CD4-positive, alpha-beta T cell (primary cell): ENCODE measurements at regions of chr7 and their contacts with region 1.

Region 1: DNA sequence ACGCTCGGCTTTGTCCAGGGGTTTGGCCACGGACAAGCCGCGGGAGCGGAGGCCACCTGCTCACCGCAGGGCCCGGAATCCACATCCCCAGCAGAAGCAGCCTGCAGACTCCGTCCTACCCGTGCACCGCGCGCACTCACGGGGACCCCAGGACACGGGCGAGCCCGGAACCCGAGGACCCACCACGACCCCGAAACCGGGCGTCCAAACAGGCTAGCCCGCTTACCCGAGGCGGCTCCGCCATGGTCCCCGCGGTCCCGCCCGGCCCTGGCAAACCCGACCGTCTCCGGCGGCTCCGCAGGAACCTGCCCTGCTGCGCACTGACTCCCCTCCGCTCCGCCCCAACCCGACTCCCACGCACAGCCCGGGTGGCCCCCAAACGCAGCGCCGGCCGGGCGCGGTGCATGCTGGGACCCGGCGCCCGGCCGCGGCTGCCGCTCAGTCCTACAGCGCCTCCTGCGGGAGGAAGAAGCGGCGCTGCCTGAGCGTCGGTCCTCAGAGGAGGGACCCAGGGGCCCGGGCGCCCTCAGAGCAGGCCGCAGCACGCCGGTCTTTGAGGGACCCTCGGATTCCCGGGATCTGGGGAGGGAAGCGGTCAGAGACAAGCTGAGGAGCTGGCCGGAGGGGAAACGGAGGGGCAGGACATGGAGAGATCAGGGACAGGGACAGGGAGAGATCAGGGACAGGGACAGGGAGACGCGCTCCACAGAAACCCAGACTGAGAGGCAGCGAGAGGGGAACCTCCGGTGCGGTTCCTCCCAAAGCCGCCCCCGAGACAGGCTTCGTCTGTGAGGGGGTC is at the start of gene ZNF786:
- DNase-seq: peak; percentile 81 to 97 (median 90)
- ATAC-seq: peak; percentile 82
- H3K4me3 ChIP-seq: peak within 1 kb of the TSS; percentile 72
- H3K4me3 Mint-ChIP-seq: peak within 1 kb of the TSS; percentile 100
- H3K27ac ChIP-seq: peak within 1 kb of the TSS; percentile 82 to 90
- H3K27ac Mint-ChIP-seq: peak within 1 kb of the TSS; percentile 93
- H3K4me1 ChIP-seq: peaks cover 27% of the 10 kb centered on the region
- H3K4me1 Mint-ChIP-seq: peaks cover 26% of the 10 kb centered on the region
- H3K27me3 ChIP-seq: no peaks in the 10 kb centered on the region
- H3K27me3 Mint-ChIP-seq: no peaks in the 10 kb centered on the region
- CTCF ChIP-seq: peak; percentile 87
- total RNA-seq, gene ZNF786: 2.7 to 3.5 TPM

Region 2: GRCh38 chr7:148987010-148987750 is 103.4 kb before region 1 on chr7:
- CTCF ChIA-PET with region 1: no interaction called
- POLR2A ChIA-PET with region 1: interaction called, 3 read pairs
- intact Hi-C with region 1: loop called in 1 of 2 experiments (anchors 2 kb)
- DNase-seq: peak; percentile 58 to 94 (median 70)
- ATAC-seq: peak; percentile 71
- H3K4me3 ChIP-seq: peak overlapping the region; percentile 95
- H3K4me3 Mint-ChIP-seq: peak overlapping the region; percentile 96
- H3K27ac ChIP-seq: peak overlapping the region; percentile 73 to 94
- H3K27ac Mint-ChIP-seq: peak overlapping the region; percentile 95
- H3K4me1 ChIP-seq: peaks cover 41% of the 10 kb centered on the region
- H3K4me1 Mint-ChIP-seq: peaks cover 55% of the 10 kb centered on the region
- H3K27me3 ChIP-seq: no peaks in the 10 kb centered on the region
- H3K27me3 Mint-ChIP-seq: peaks cover 5% of the 10 kb centered on the region
- CTCF ChIP-seq: no peak

Region 3: GRCh38 chr7:149005241-149006050 is 85.2 kb before region 1 on chr7:
- CTCF ChIA-PET with region 1: interaction called, 8 read pairs
- POLR2A ChIA-PET with region 1: interaction called, 10 read pairs
- intact Hi-C with region 1: loop called (anchors 1 kb)
- DNase-seq: peak; percentile 75 to 92 (median 80)
- ATAC-seq: peak; percentile 90
- H3K4me3 ChIP-seq: no peak overlapping the region
- H3K4me3 Mint-ChIP-seq: no peak overlapping the region
- H3K27ac ChIP-seq: no peak overlapping the region
- H3K27ac Mint-ChIP-seq: peak overlapping the region; percentile 46
- H3K4me1 ChIP-seq: peaks cover 12% of the 10 kb centered on the region
- H3K4me1 Mint-ChIP-seq: peaks cover 6% of the 10 kb centered on the region
- H3K27me3 ChIP-seq: no peaks in the 10 kb centered on the region
- H3K27me3 Mint-ChIP-seq: no peaks in the 10 kb centered on the region
- CTCF ChIP-seq: peak; percentile 95

Region 4: DNA sequence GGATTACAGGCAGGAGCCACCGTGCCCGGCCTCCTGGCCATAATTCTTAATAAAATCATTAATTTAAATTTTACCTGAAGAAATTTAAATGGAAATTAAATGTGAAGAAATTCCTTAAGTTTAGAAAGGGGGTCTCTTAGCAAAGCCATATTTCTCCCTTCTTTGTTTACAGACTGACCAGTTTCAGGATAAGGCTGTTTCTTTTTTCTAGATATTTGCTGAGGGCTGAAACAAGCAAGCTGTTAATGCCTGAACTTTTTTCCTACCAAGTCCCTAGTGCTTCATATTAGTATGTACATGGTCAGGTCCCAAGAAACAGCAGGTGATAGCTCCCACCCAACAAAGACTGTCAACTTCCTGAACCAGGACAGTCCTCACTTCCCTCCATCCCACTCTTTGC is 44.2 kb before region 1 on chr7:
- CTCF ChIA-PET with region 1: no interaction called
- POLR2A ChIA-PET with region 1: no interaction called
- intact Hi-C with region 1: no loop called
- DNase-seq: no peak
- ATAC-seq: no peak
- H3K4me3 ChIP-seq: no peak overlapping the region
- H3K4me3 Mint-ChIP-seq: no peak overlapping the region
- H3K27ac ChIP-seq: no peak overlapping the region
- H3K27ac Mint-ChIP-seq: no peak overlapping the region
- H3K4me1 ChIP-seq: no peaks in the 10 kb centered on the region
- H3K4me1 Mint-ChIP-seq: no peaks in the 10 kb centered on the region
- H3K27me3 ChIP-seq: no peaks in the 10 kb centered on the region
- H3K27me3 Mint-ChIP-seq: no peaks in the 10 kb centered on the region
- CTCF ChIP-seq: no peak

Region 5: DNA sequence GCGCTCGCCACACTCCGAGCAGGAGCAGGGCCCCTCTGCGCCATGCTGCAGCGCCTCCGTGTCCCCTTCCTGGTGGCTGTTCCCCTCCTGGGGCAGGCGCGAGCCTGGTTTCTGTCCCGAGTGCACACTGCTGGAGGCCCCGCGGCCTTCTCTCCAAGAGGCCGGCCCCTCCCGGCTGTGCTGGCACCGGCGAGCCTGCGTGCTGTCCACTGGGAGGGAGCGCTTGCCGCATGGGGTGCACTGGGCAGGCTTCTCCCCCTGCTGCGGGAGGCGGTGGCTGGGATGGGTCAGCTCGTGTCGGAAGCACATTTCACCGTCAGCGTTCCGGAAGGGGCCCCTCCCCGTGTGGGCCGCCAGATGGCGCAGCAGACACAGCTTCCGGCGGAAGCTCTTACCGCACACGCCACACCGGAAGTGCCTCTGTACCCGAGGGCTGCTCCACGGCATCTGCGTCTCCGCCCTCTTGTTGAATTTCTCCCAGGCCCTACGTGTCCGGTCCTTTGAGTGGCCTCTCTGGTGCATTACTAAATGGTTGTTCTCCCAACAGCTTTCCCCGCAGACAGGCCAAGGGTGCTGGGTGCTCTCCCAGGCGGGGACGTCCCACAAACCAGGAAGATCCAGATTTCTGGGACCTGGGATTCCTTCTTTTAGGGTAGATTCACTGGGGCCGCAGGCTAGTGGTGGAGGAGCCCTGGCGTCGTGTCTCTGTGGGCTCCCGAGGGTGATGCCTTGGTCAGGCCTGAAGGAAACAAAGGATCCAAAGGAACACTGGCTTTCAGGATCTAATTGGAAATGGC is 18.8 kb before region 1 on chr7:
- CTCF ChIA-PET with region 1: interaction called, 3 read pairs
- POLR2A ChIA-PET with region 1: interaction called, 4 read pairs
- intact Hi-C with region 1: loop called (anchors 1 kb)
- DNase-seq: peak; percentile 23 to 81 (median 44)
- ATAC-seq: peak; percentile 76
- H3K4me3 ChIP-seq: no peak overlapping the region
- H3K4me3 Mint-ChIP-seq: no peak overlapping the region
- H3K27ac ChIP-seq: peak overlapping the region in 1 of 2 donors; percentile 34
- H3K27ac Mint-ChIP-seq: peak overlapping the region; percentile 43
- H3K4me1 ChIP-seq: peaks cover 11% of the 10 kb centered on the region
- H3K4me1 Mint-ChIP-seq: peaks cover 15% of the 10 kb centered on the region
- H3K27me3 ChIP-seq: no peaks in the 10 kb centered on the region
- H3K27me3 Mint-ChIP-seq: no peaks in the 10 kb centered on the region
- CTCF ChIP-seq: no peak

Region 6: GRCh38 chr7:149125863-149126661 is 35.5 kb after region 1 on chr7 and contains the start of gene ZNF425:
- CTCF ChIA-PET with region 1: no interaction called
- POLR2A ChIA-PET with region 1: interaction called, 10 read pairs
- intact Hi-C with region 1: loop called (anchors 1 to 2 kb)
- DNase-seq: peak; percentile 87 to 96 (median 93)
- ATAC-seq: peak; percentile 83
- H3K4me3 ChIP-seq: peak within 1 kb of the TSS; percentile 100
- H3K4me3 Mint-ChIP-seq: peak within 1 kb of the TSS; percentile 100
- H3K27ac ChIP-seq: peak within 1 kb of the TSS; percentile 79 to 80
- H3K27ac Mint-ChIP-seq: peak within 1 kb of the TSS; percentile 96
- H3K4me1 ChIP-seq: peaks cover 12% of the 10 kb centered on the region
- H3K4me1 Mint-ChIP-seq: peaks cover 24% of the 10 kb centered on the region
- H3K27me3 ChIP-seq: no peaks in the 10 kb centered on the region
- H3K27me3 Mint-ChIP-seq: no peaks in the 10 kb centered on the region
- CTCF ChIP-seq: peak; percentile 94
- total RNA-seq, gene ZNF425: 0.22 to 0.39 TPM